MCF 10A (cell line): ENCODE measurements at regions of chr6 and their contacts with region 1.

Region 1: DNA sequence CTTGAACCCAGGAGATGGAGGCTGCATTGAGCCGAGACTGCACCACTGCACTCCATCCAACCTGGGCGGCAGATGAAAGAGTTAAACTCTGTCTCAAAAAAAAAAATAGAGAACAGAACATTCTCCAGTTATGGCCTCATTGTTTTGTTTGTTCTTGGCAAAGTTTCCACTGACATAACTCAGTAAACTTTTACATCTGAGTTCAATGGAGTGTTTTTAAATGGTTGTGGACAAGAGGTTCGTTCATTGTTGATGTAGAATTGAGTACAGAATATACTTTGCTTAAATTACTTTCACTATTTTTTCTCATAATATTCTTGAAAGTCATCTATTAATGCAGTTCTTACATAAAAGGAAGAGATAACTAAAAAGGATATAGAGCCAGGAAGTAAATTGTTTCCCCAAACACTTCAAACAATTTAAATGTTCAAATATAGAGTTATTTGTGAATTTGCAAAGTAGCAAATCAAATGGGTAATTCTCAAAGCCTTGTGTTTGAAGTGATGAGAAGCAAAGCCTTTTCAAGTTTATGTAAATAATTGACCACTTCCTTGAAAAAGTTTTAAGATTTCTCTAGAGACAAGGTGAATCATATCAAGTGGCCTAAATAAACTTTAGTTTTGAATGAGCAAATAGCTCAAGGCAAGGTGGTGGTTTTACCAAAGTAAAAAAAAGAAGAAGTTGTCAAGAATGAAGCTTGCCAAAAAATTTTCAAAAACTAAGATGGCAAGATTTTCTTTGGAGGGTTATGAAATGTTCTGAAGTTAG is 42.4 kb upstream of the IFNGR1 start:
- DNase-seq: peak; percentile 79
- H3K4me3 Mint-ChIP-seq: peak overlapping the region; percentile 65
- H3K27ac Mint-ChIP-seq: peak overlapping the region; percentile 84
- H3K4me1 Mint-ChIP-seq: peaks cover 40% of the 10 kb centered on the region
- H3K27me3 Mint-ChIP-seq: no peaks in the 10 kb centered on the region
- CTCF ChIP-seq: no peak

Region 2: DNA sequence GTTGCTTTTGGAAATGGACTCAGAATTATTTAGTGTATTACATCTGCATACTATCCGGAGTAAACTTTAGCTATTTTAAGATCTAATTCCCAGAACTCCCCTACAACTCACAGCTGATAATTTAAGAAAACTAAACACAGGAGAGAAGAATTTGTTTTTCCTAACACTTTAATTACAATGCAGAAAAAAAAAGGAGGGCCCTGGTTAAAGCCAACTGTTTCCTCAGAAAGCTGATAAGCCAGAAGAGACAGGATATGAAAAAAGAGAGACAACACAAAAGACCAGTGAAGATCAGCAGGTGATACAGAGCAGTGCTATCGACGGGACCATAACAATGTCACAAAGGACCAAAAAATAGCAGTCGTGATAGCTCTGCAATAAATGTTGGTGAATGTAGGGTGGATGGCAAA is 48.2 kb before region 1 on chr6:
- CTCF ChIA-PET with region 1: interaction called, 4 read pairs
- POLR2A ChIA-PET with region 1: interaction called, 47 read pairs
- intact Hi-C with region 1: loop called (anchors 5 kb)
- DNase-seq: no peak
- H3K4me3 Mint-ChIP-seq: peak overlapping the region; percentile 91
- H3K27ac Mint-ChIP-seq: no peak overlapping the region
- H3K4me1 Mint-ChIP-seq: peaks cover 57% of the 10 kb centered on the region
- H3K27me3 Mint-ChIP-seq: no peaks in the 10 kb centered on the region
- CTCF ChIP-seq: no peak

Region 3: DNA sequence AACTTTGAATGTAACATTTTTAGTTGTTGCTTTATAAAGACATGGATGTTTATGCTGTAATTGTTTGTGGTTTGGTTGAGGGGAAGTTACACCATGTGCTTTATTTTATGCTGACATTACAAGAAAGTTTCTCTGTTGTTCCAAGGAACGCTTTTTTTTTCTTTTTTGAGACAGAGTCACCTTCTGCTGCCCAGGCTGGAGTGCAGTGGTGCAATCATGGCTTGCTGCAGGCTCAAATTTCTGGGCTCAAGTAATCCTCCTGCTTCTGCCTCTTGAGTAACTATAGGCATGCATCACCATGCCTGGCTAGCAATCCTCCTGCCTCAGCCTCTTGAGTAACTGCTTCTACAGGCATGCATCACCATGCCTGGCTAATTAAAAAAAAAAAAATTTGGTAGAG is 21.4 kb before region 1 on chr6:
- CTCF ChIA-PET with region 1: interaction called, 4 read pairs
- POLR2A ChIA-PET with region 1: interaction called, 87 read pairs
- intact Hi-C with region 1: no loop called
- DNase-seq: peak; percentile 98
- H3K4me3 Mint-ChIP-seq: no peak overlapping the region
- H3K27ac Mint-ChIP-seq: peak overlapping the region; percentile 92
- H3K4me1 Mint-ChIP-seq: peaks cover 59% of the 10 kb centered on the region
- H3K27me3 Mint-ChIP-seq: no peaks in the 10 kb centered on the region
- CTCF ChIP-seq: no peak

Region 4: DNA sequence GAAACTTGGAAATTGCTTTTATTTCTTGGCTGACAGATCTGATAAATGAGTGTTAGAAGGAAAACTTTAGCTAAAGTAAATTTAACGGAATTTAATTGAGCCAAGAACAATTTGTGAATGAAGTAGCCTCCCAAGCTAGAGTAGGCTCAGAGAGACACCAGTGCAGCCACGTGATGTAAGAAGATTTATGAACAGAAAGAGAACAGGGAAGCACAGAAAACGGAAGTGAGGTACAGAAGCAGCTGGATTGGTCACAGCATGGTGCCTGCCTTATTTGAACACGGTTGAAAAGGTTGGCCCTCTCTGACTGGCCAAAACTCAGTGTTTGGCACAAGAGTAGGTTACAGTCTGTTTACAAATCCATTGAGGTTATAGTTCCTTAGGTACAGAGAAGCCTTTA is 12.9 kb before region 1 on chr6:
- CTCF ChIA-PET with region 1: interaction called, 3 read pairs
- POLR2A ChIA-PET with region 1: interaction called, 87 read pairs
- intact Hi-C with region 1: no loop called
- DNase-seq: no peak
- H3K4me3 Mint-ChIP-seq: no peak overlapping the region
- H3K27ac Mint-ChIP-seq: no peak overlapping the region
- H3K4me1 Mint-ChIP-seq: peaks cover 7% of the 10 kb centered on the region
- H3K27me3 Mint-ChIP-seq: no peaks in the 10 kb centered on the region
- CTCF ChIP-seq: no peak